Activated CD4-positive, alpha-beta T cell treated with anti-CD3 and anti-CD28 coated beads, Interleukin-2, amount 10 ng/mL, durations not matched to agents 24 days and 14 days (primary cell): ENCODE measurements at regions of chr5 and their contacts with region 1.

Region 1: DNA sequence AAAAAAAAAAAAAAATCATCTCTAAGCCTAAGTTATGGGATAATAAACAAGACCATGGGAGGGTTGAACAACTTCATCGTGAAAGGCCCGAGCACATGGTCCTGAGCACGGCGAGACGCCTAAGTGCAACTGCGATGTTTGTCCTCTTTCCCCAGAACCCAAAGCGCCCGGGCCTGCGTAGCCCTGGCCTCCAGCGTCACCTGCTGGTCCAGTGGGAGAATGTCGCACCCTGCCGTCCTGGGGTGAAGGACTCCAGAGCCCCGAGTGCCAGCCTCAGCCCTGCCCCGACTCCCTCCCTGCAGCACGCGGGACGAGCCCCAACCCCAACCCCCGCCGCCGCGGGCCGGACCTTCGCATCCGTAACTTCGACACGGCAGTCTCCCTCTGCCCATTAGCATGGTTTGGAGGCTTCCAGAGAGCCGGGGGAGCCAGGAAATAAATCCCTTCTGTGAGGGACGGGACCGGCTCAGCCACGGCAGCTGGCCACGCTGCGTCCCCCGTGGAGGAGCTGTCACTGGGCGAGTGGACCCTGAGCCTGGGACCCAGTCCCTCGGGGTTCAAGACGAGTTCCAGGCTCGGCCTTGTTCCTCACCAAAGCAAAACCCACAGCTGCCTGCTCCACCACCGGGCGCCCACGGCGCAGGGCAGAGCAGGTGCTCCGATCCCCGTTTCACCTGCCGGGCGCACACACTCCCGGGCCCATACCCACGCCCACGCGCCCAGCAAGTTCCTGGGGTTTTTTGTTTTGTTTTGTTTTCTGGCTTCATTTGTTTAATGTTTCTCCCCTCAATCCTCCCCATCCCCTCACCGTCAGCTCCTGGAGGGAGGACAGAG is 132.5 kb upstream of the HAND1 start:
- DNase-seq: peak; percentile 89
- H3K4me3 Mint-ChIP-seq: peak overlapping the region; percentile 32
- H3K27ac Mint-ChIP-seq: no peak overlapping the region
- H3K4me1 Mint-ChIP-seq: peaks cover 3% of the 10 kb centered on the region
- H3K27me3 Mint-ChIP-seq: peaks cover 49% of the 10 kb centered on the region

Region 2: DNA sequence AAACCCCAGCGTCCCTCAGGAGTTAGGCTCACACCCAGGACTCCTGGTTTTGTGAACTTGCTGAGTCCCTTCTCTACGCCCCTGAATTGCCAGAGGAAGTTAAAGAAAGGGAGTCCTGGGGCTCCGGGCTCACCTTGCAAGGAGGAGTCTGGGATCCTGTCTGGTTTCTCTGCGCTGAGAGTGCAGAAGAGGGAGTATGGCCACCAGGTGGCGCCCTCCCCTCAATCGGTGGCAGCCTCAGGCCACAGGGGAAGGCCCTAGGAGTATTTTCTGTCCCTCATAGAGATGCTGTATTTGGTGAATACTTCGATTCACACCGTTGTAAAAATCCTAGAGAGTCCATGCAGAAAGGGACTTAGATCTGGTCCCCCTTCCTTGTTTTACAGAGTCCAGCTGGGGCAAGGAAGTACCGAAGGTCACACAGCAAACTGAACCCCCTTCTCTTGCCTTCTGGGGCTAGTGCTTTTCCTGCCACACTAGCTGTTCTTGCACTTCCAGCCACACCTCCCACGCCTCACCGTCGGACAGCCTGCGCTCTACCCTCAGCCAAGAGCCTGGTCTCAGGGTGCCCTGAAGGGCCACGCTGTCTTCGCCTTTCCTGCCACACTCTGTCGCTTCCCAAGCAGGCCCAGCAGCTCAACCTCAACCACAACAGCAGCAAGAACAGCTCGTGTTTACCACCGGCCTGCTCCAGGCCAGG is 142.7 kb before region 1 on chr5:
- intact Hi-C with region 1: loop called (anchors 1 kb)
- DNase-seq: peak; percentile 92
- H3K4me3 Mint-ChIP-seq: no peak overlapping the region
- H3K27ac Mint-ChIP-seq: no peak overlapping the region
- H3K4me1 Mint-ChIP-seq: no peaks in the 10 kb centered on the region
- H3K27me3 Mint-ChIP-seq: peaks cover 58% of the 10 kb centered on the region

Region 3: DNA sequence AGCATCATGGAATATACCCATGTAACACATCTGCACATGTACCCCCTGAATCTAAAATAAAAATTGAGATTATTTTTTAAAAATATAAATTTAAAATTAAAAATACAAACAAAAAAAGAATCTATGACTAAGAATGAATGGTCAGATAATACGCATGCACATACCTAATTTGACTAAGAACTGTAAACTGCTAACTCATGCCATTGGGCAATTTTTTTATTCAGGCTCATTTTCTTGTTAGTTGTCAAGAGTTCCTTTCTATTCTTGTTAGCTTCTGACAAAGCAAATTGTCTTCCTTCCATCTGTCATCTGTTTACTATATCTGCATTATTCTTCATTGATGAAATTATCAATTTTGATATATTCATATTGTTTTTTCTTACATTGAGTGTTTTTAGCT is 63.0 kb before region 1 on chr5:
- intact Hi-C with region 1: no loop called
- DNase-seq: no peak
- H3K4me3 Mint-ChIP-seq: no peak overlapping the region
- H3K27ac Mint-ChIP-seq: no peak overlapping the region
- H3K4me1 Mint-ChIP-seq: no peaks in the 10 kb centered on the region
- H3K27me3 Mint-ChIP-seq: peaks cover 9% of the 10 kb centered on the region

Region 4: GRCh38 chr5:154575546-154576428 is 34.8 kb before region 1 on chr5:
- intact Hi-C with region 1: no loop called
- DNase-seq: no peak
- H3K4me3 Mint-ChIP-seq: no peak overlapping the region
- H3K27ac Mint-ChIP-seq: no peak overlapping the region
- H3K4me1 Mint-ChIP-seq: no peaks in the 10 kb centered on the region
- H3K27me3 Mint-ChIP-seq: peaks cover 24% of the 10 kb centered on the region